HEK293 (cell line): ENCODE measurements at regions of chr1 and their contacts with region 1.

Region 1: GRCh38 chr1:205227584-205228006 is at the start of gene TMCC2:
- H3K4me3 ChIP-seq: peak within 1 kb of the TSS; percentile 63
- H3K27ac ChIP-seq: peak within 1 kb of the TSS; percentile 45; the same call in 1 of the 2 replicates
- H3K4me1 ChIP-seq: peaks cover 19% of the 10 kb centered on the region
- CTCF ChIP-seq: no peak

Region 2: DNA sequence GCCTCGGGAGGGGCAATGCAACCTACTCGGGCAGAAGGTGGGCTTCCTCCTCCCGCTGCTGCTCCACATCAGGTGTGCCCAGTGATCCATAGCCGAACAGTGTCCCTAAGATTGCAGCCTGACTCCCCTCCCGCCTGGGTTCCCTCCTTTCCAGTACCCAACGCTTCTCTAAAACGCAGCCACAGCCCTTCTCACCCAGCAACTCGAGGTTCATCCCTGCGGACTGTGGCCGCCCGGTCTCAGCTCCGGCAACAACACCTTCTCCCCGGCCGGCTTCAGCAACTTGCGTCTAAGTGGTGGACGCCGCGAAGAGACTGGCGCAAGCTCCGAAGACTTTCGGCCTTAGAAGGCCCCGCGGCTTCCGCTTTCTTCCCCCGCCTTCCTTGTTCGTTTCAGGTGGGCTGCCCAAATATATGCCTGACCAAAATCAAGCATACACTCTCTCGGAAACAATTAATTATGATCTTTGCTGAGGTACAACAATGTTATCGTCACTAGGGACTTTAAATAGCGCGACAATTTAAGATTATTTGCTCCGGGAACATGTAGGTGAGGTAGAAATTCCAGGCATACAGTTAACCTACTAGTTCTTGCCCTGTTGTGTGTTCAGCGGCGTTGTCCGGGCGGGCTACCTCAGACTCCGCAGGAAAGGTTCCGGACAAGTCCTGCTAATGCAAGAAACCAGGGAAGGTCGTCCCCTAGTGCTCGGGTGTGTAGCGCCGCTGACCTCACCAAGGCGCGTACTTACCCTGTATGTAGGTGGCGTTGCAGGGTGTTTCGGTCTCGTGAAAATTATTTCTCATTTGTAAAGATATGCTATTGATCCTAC is 105.7 kb before region 1 on chr1 and contains the start of gene RBBP5:
- CTCF ChIA-PET with region 1: interaction called, 5 read pairs
- POLR2A ChIA-PET with region 1: interaction called, 20 read pairs
- H3K4me3 ChIP-seq: peak within 1 kb of the TSS; percentile 96
- H3K27ac ChIP-seq: peak within 1 kb of the TSS; percentile 71
- H3K4me1 ChIP-seq: 0 out of 2 replicates have a peak, but pooled peaks cover 2% of the 10 kb centered on the region
- CTCF ChIP-seq: peak; percentile 99

Region 3: GRCh38 chr1:205237526-205238484 is 10.2 kb after region 1 on chr1:
- CTCF ChIA-PET with region 1: interaction called, 12 read pairs
- POLR2A ChIA-PET with region 1: interaction called, 8 read pairs
- H3K4me3 ChIP-seq: no peak overlapping the region
- H3K27ac ChIP-seq: no peak overlapping the region
- H3K4me1 ChIP-seq: no peaks in the 10 kb centered on the region
- CTCF ChIP-seq: no peak

Region 4: DNA sequence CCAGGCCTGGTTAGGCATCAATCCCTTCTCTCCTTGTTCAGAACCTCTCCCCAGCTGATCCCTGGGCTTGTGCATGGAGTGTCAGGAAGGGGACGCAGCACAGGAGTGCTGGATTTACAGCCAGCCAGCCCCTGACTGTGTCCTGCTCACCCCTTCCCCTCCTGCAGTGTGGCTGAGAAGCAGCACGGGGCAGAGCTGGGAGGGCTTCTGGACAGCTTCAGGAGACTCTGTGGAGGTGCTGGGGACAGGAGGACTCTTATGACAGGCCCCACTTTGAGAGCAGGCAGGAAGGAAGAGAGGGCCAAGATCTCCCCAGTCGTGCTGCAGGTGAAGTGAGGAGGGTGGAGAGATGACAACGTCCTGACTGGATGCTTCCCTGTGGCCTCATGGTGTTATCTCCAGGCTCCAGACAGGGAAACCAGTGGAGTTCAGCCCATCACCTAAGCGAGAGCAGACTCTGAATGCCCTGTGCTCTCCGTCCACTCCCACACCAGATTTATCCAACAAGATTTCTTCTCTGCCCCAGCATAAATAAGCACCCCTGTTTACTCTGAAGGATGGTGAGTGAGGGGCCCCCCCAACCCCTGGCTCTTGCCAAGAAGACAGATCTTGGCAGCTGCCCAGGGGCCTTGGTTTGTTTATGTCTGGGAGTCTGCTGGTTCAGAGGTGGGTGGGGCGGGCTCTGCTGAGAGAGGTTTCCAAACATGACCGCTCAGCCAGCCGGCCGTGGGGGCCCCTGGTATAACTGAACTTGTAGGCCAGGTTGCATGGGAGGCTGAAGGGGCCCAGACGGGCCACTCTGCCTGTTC is 21.4 kb after region 1 on chr1:
- CTCF ChIA-PET with region 1: interaction called, 253 read pairs
- POLR2A ChIA-PET with region 1: interaction called, 19 read pairs
- H3K4me3 ChIP-seq: no peak overlapping the region
- H3K27ac ChIP-seq: peak overlapping the region; percentile 45
- H3K4me1 ChIP-seq: peaks cover 12% of the 10 kb centered on the region
- CTCF ChIP-seq: no peak

Region 5: DNA sequence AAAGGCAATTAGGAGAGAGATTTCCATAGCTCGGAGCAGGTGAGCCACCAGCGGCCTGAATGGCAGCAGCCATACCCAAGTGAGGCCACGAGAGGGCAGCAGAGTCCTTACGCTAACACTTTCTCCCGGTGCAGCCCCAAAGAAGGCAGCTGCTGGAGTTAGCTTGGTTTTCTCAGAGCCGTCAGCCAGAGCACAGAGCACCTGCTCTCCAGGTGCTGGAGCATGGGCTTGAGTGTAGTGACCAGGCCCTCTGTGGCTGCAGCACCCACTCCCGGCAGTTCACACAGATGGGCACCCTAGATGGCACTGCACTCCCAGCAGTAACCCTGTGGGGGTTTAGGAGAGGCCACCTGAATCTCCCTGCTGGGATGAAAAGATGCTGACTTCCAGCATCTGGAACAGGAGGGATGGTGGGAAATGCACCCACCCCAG is 46.0 kb after region 1 on chr1:
- CTCF ChIA-PET with region 1: interaction called, 18 read pairs
- POLR2A ChIA-PET with region 1: interaction called, 3 read pairs
- H3K4me3 ChIP-seq: no peak overlapping the region
- H3K27ac ChIP-seq: no peak overlapping the region
- H3K4me1 ChIP-seq: no peaks in the 10 kb centered on the region
- CTCF ChIP-seq: peak; percentile 93